ENCODE measurements at regions of chr10 and their contacts with region 1.

Region 1: GRCh38 chr10:102621438-102622325 is 22.6 kb upstream of the TRIM8 start:
- DNase-seq: no peak
- H3K4me3 ChIP-seq: no peak overlapping the region
- H3K27ac ChIP-seq: no peak overlapping the region
- H3K4me1 ChIP-seq: peaks cover 2 to 11% (median 7%) of the 10 kb centered on the region in 4 experiments
- H3K27me3 ChIP-seq: no peaks in the 10 kb centered on the region
- CTCF ChIP-seq: no peak
- EP300 ChIP-seq: no peak
- POLR2A ChIP-seq: no peak
- RAD21 ChIP-seq: no peak

Region 2: GRCh38 chr10:102604379-102604960 is 17.2 kb before region 1 on chr10:
- CTCF ChIA-PET with region 1: interaction called, 13 read pairs
- POLR2A ChIA-PET with region 1: no interaction called
- DNase-seq: no peak
- H3K4me3 ChIP-seq: no peak overlapping the region
- H3K27ac ChIP-seq: no peak overlapping the region
- H3K4me1 ChIP-seq: no peaks in the 10 kb centered on the region
- H3K27me3 ChIP-seq: no peaks in the 10 kb centered on the region
- CTCF ChIP-seq: peak in 1 of 3 experiments; percentile 19; a peak in 1 of 4 replicates
- EP300 ChIP-seq: no peak
- POLR2A ChIP-seq: no peak
- RAD21 ChIP-seq: no peak

Region 3: GRCh38 chr10:102917962-102918816 is 296.5 kb after region 1 on chr10 and contains the start of gene CNNM2:
- CTCF ChIA-PET with region 1: no interaction called
- POLR2A ChIA-PET with region 1: no interaction called
- DNase-seq: peak; percentile 98 to 100
- H3K4me3 ChIP-seq: peak within 1 kb of the TSS; percentile 89 to 96 (median 92)
- H3K27ac ChIP-seq: peak within 1 kb of the TSS; percentile 93
- H3K4me1 ChIP-seq: peaks cover 3 to 10% (median 7%) of the 10 kb centered on the region in 4 experiments; a peak in 6 of 7 replicates
- H3K27me3 ChIP-seq: peaks cover 0 to 12% (median 11%) of the 10 kb centered on the region in 4 experiments; a peak in 5 of 7 replicates
- CTCF ChIP-seq: no peak
- EP300 ChIP-seq: no peak
- POLR2A ChIP-seq: peak in 1 of 2 experiments; percentile 59; a peak in 2 of 3 replicates
- RAD21 ChIP-seq: no peak
- total RNA-seq, gene CNNM2: 20.3 and 23.6 TPM in 2 replicates

Measured in H1 (cell line).